HEK293 (cell line): ENCODE measurements at regions of chr12 and their contacts with region 1.

Region 1: GRCh38 chr12:106282457-106283097 is 20.0 kb upstream of the TCP11L2 start:
- H3K4me3 ChIP-seq: no peak overlapping the region
- H3K27ac ChIP-seq: no peak overlapping the region
- H3K4me1 ChIP-seq: peaks cover 3% of the 10 kb centered on the region
- CTCF ChIP-seq: peak; percentile 54; the same call in 1 of the 2 replicates

Region 2: DNA sequence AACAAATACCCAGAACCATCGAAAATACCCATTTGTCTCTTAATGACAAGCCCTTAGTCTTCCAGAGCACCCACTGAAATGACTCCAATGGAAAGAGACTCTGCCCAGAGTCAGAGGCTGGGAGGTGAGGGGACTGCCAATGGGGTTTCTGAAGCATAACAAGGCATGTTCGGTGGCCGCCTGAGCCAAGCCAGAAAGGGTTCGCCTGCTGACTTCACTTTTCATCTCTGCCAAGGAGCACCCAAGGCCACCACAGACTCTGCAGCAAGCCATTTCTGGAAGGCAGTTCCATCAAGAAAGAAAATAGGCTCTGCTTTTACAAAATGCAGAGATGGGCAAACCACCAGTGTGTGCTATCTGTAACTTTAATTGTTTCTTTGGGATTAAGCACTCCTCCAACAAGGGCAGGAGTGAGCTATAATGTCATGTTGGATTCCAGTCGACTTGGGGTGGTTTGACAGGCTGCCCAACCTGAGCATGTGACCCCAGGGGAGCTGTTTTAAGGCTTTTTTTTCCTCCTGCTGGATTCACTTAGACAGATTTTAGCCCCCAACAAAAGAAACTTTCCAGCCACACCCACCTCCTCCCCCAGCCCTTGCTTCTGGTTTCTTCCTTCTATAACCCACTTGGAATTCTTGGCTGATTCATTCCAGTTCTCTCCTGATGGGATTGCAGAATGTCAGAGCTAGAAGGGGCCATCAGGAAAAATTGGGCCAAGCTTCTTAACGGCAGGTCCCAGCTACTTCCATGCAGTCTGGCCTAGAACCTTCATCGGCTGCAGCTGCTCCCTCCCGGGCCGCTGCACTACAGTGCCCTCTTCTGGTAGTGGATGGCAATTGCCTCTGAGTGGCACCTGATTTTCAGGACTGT is 58.9 kb before region 1 on chr12:
- CTCF ChIA-PET with region 1: interaction called, 158 read pairs
- POLR2A ChIA-PET with region 1: interaction called, 4 read pairs
- H3K4me3 ChIP-seq: no peak overlapping the region
- H3K27ac ChIP-seq: no peak overlapping the region
- H3K4me1 ChIP-seq: no peaks in the 10 kb centered on the region
- CTCF ChIP-seq: peak; percentile 82

Region 3: GRCh38 chr12:106254724-106255123 is 27.9 kb before region 1 on chr12:
- CTCF ChIA-PET with region 1: interaction called, 10 read pairs
- POLR2A ChIA-PET with region 1: no interaction called
- H3K4me3 ChIP-seq: no peak overlapping the region
- H3K27ac ChIP-seq: no peak overlapping the region
- H3K4me1 ChIP-seq: peaks cover 4% of the 10 kb centered on the region; the same call in 1 of the 2 replicates
- CTCF ChIP-seq: no peak

Region 4: DNA sequence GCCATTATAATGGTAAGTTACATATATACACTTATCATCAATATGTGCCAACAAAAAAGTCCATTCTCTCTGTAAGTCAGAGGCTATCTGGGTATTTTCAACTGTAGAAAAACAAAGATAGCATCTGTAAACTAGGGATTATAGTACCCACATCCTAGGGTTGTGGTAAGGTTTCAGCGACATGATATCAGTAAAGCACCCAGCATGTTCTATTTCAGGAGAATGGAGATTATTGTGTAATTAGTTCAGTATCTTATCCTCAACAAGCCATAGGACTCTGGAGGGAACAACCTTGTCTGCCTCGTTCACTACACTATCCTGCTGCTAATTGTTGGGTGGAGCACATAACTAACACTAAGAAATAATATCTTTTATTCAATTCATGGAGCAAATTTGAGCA is 15.0 kb before region 1 on chr12:
- CTCF ChIA-PET with region 1: interaction called, 25 read pairs
- POLR2A ChIA-PET with region 1: no interaction called
- H3K4me3 ChIP-seq: no peak overlapping the region
- H3K27ac ChIP-seq: no peak overlapping the region
- H3K4me1 ChIP-seq: no peaks in the 10 kb centered on the region
- CTCF ChIP-seq: no peak

Region 5: GRCh38 chr12:106296193-106296877 is 13.8 kb after region 1 on chr12:
- CTCF ChIA-PET with region 1: interaction called, 26 read pairs
- POLR2A ChIA-PET with region 1: no interaction called
- H3K4me3 ChIP-seq: no peak overlapping the region
- H3K27ac ChIP-seq: no peak overlapping the region
- H3K4me1 ChIP-seq: peaks cover 1% of the 10 kb centered on the region; the same call in 1 of the 2 replicates
- CTCF ChIP-seq: no peak

Region 6: GRCh38 chr12:106302401-106303201 is 20.0 kb after region 1 on chr12 and contains the start of gene TCP11L2:
- CTCF ChIA-PET with region 1: interaction called, 10 read pairs
- POLR2A ChIA-PET with region 1: no interaction called
- H3K4me3 ChIP-seq: peak within 1 kb of the TSS; percentile 86
- H3K27ac ChIP-seq: peak within 1 kb of the TSS; percentile 99
- H3K4me1 ChIP-seq: peaks cover 2% of the 10 kb centered on the region; the same call in 1 of the 2 replicates
- CTCF ChIP-seq: no peak

Region 7: DNA sequence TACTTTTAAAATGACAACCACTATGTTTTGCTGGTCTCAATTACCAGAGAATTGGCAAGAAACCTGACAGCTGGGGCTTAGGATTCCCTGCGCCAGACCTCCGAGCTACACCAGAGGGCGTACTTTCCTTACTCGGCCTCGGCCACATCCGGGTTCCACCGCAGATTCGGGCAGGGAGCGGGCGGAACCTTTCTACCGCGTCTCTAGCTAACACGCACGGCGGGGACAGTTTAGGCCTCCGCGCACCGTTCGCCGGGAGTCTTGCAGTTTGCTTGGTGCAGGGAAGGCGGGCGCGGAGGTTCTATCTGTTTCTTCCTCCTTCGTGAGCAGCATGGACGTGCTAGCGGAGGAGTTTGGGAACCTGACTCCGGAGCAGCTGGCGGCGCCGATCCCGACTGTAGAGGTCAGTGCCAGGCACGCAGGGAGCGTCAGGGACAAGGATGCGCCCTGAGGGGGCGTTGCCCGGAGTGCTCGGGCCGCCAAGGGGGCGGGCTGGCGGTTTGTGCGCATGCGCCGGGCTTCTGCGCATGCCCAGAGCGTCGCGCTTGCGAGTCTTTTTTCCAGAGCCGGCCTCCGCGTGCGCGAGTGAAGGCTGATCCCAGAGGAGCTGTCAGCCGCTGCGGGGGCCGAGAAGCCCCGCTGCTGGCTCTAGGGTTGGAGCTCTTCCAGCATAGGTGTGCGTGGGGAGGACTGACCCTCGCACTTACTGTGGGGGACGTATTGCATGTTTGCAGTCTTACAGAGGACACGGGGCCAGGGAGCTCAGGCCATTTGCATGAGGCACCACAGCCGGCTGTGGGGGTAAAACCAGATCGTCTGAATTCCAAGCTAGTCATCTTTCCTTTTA is 75.2 kb after region 1 on chr12 and contains the start of gene POLR3B:
- CTCF ChIA-PET with region 1: interaction called, 13 read pairs
- POLR2A ChIA-PET with region 1: interaction called, 3 read pairs
- H3K4me3 ChIP-seq: peak within 1 kb of the TSS; percentile 98
- H3K27ac ChIP-seq: peak within 1 kb of the TSS; percentile 74
- H3K4me1 ChIP-seq: no peaks in the 10 kb centered on the region
- CTCF ChIP-seq: peak; percentile 96